Heart right ventricle (tissue), 16 donors: ENCODE measurements at regions of chr6 and their contacts with region 1.

Region 1: DNA sequence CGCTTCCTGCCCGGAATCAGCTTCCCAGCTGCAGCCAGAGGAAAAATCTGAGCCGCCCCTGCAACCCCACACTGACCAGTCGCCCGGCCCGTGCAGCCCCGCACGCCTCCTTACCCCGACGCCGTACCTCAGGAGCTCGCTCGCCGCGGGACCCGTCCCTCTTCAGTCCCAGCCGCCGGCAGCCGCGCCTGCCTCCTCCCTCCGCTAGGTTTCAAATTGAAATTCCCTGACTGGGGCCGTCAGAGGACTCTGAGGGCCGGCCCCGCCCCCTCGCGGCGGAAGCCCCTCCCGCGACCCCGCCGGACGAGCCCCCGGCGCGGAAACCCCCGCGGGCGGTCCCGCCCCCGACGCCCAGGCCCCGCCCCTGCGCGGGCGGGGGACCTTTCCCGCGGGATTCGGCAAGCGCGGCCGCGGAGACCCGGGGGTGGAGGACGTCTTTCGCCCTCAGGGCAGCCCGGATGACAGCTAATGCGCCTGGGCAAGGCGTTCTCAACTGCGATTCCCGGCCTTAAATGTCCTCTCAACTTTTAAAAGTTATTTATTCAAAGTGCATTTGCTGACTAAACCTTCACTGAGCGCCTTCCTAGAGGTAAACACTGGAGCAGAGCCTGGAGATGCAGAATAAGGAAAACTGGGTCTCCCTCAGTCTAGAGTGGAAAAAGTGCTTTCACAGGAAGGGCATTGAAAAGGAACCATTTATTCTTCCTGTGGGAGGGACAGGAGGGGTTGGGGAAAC is at the start of gene EPB41L2:
- DNase-seq: peak; percentile 87 to 91
- ATAC-seq: peak; percentile 92 to 98 (median 96)
- H3K4me3 ChIP-seq: peak within 1 kb of the TSS; percentile 77 to 97 (median 91)
- H3K27ac ChIP-seq: peak within 1 kb of the TSS; percentile 56 to 94 (median 90)
- H3K4me1 ChIP-seq: peaks cover 0 to 36% (median 19%) of the 10 kb centered on the region in 9 donors
- H3K27me3 ChIP-seq: no peaks in the 10 kb centered on the region
- CTCF ChIP-seq: peak; percentile 14 to 46 (median 30)
- total RNA-seq, gene EPB41L2: 46.1 to 98.6 (median 55.7) TPM

Region 2: GRCh38 chr6:130872250-130873095 is 190.7 kb before region 1 on chr6:
- intact Hi-C with region 1: no loop called
- DNase-seq: peak; percentile 66 to 69
- ATAC-seq: peak in 4 of 8 donors; percentile 23 to 63 (median 54)
- H3K4me3 ChIP-seq: no peak overlapping the region
- H3K27ac ChIP-seq: no peak overlapping the region
- H3K4me1 ChIP-seq: no peaks in the 10 kb centered on the region
- H3K27me3 ChIP-seq: no peaks in the 10 kb centered on the region
- CTCF ChIP-seq: peak; percentile 55 to 92 (median 83)

Region 3: GRCh38 chr6:130885392-130886192 is 177.6 kb before region 1 on chr6:
- intact Hi-C with region 1: loop called in 5 of 10 experiments (anchors 5 kb)
- DNase-seq: peak in 1 of 2 donors; percentile 83
- ATAC-seq: peak in 7 of 8 donors; percentile 81 to 92 (median 88)
- H3K4me3 ChIP-seq: no peak overlapping the region
- H3K27ac ChIP-seq: no peak overlapping the region
- H3K4me1 ChIP-seq: peaks cover 0 to 7% (median 0%) of the 10 kb centered on the region in 9 donors
- H3K27me3 ChIP-seq: no peaks in the 10 kb centered on the region
- CTCF ChIP-seq: peak; percentile 74 to 96 (median 89)

Region 4: DNA sequence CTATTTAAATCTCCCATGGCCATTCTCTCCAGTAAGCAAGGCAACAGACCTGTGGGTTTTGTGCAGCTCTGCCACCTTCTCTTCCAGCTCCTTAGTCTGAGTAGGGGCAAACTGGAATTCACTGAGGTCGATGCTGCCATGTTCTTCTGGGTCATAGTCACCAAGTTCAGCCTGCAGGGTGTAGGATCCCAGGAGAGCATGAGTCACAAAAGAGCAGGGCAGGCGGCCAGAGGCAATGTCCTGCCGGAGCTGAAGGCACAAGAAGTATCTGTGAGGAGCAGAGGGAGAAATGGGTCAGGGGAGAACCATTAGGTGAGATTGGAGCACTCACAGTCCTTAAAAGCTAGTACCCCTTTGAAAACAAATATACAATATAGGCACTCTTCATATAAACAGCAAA is 162.3 kb before region 1 on chr6:
- intact Hi-C with region 1: loop called in 1 of 10 experiments (anchors 5 kb)
- DNase-seq: peak; percentile 15 to 63
- ATAC-seq: peak in 3 of 8 donors; percentile 58 to 84 (median 68)
- H3K4me3 ChIP-seq: no peak overlapping the region
- H3K27ac ChIP-seq: no peak overlapping the region
- H3K4me1 ChIP-seq: peaks cover 0 to 20% (median 0%) of the 10 kb centered on the region in 9 donors
- H3K27me3 ChIP-seq: no peaks in the 10 kb centered on the region
- CTCF ChIP-seq: no peak

Region 5: DNA sequence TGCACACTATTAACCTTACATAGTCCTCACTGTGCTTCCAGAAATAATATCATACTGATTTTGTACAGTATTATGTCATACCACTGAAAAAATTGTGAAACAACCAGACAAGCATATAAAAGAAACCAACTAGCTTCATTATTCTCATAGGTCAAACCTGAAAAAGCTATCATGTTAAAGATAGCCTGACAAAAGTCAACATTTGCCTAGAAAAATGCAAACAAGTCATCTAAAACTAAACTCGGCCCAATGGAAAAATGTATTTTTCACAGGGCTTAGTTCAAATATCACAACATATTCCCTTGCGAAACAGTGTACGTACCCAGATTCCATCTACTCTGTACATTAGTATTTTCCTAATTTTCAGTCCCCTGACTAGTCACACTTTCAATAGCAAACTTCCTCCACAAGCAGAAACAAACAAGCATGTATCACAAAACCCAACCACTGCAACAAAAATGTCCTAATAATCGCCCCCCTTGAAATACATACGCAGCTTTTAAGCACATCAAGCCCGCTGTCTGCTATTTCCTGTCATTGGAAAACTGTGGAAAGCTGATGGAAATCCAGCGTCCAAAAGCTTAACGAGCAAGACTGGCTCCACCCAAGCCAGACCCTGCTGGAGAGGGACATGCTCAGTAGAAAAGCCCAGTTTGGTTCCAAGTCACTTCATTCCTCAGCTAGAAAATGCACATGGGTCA is 93.3 kb before region 1 on chr6:
- intact Hi-C with region 1: loop called in 5 of 10 experiments (anchors 5 to 10 kb)
- DNase-seq: peak; percentile 38 to 66
- ATAC-seq: peak; percentile 68 to 90 (median 84)
- H3K4me3 ChIP-seq: peak overlapping the region; percentile 15 to 61 (median 50)
- H3K27ac ChIP-seq: peak overlapping the region; percentile 9 to 82 (median 79)
- H3K4me1 ChIP-seq: peaks cover 0 to 56% (median 45%) of the 10 kb centered on the region in 9 donors
- H3K27me3 ChIP-seq: no peaks in the 10 kb centered on the region
- CTCF ChIP-seq: no peak

Region 6: GRCh38 chr6:131001111-131001736 is 62.0 kb before region 1 on chr6:
- intact Hi-C with region 1: loop called in 1 of 10 experiments (anchors 5 kb)
- DNase-seq: no peak
- ATAC-seq: peak in 1 of 8 donors; percentile 26
- H3K4me3 ChIP-seq: peak overlapping the region in 3 of 10 donors; percentile 16 to 28 (median 25)
- H3K27ac ChIP-seq: peak overlapping the region in 3 of 10 donors; percentile 5 to 58 (median 41)
- H3K4me1 ChIP-seq: peaks cover 0 to 91% (median 48%) of the 10 kb centered on the region in 9 donors
- H3K27me3 ChIP-seq: no peaks in the 10 kb centered on the region
- CTCF ChIP-seq: no peak

Region 7: GRCh38 chr6:131013495-131013894 is 49.7 kb before region 1 on chr6:
- intact Hi-C with region 1: loop called in 2 of 10 experiments (anchors 2 to 10 kb)
- DNase-seq: peak in 1 of 2 donors; percentile 47
- ATAC-seq: peak in 5 of 8 donors; percentile 53 to 74 (median 60)
- H3K4me3 ChIP-seq: peak overlapping the region in 3 of 10 donors; percentile 14 to 34 (median 18)
- H3K27ac ChIP-seq: peak overlapping the region in 7 of 10 donors; percentile 2 to 57 (median 33)
- H3K4me1 ChIP-seq: peaks cover 0 to 57% (median 36%) of the 10 kb centered on the region in 9 donors
- H3K27me3 ChIP-seq: no peaks in the 10 kb centered on the region
- CTCF ChIP-seq: no peak

Region 8: GRCh38 chr6:131116749-131117360 is 53.7 kb after region 1 on chr6:
- intact Hi-C with region 1: loop called in 2 of 10 experiments (anchors 10 kb)
- DNase-seq: peak in 1 of 2 donors; percentile 11
- ATAC-seq: peak in 1 of 8 donors; percentile 54
- H3K4me3 ChIP-seq: no peak overlapping the region
- H3K27ac ChIP-seq: no peak overlapping the region
- H3K4me1 ChIP-seq: no peaks in the 10 kb centered on the region
- H3K27me3 ChIP-seq: no peaks in the 10 kb centered on the region
- CTCF ChIP-seq: peak; percentile 20 to 71 (median 53)